K562 (cell line): ENCODE measurements at regions of chr16 and their contacts with region 1.

Region 1: DNA sequence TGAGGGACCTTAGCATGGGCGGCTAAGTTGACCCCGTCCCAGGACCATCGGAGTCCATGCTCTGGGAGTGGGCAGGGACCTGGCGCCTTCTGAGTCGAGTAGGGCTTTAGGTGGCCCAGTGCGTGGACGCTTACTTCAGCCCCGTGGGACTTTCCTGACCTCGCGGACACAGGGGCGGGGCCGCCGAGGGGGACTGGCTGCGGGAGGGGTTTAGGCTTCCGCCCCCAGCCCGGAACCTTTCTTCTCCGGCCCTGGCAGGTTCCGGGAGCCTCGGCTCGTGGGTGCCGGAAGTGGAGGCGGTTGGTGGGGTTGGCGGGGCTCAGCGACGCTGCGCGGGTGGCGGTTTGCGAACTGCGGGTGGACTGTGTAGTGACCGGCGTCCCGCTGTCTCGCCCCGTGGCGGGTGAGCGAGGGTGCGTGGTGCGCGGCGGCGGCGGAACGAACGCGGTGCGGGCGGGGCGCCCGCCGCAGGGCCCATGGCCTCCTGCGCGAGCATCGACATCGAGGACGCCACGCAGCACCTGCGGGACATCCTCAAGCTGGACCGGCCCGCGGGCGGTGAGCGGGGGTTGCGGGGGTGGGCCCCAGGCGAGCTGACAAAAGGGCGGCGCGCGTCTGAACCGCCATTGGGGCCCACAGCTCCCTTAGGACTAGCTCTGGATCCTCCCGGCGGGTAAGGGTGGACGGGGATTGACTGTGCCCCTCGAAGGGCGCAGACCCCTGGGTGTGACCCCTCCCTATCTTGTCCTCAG is at the start of gene EDC4:
- DNase-seq: peak; percentile 90 to 95 (median 94)
- ATAC-seq: peak; percentile 94
- H3K4me3 ChIP-seq: peak within 1 kb of the TSS; percentile 85
- H3K27ac ChIP-seq: peak within 1 kb of the TSS; percentile 83
- H3K4me1 ChIP-seq: peaks cover 21% of the 10 kb centered on the region in 2 experiments; a peak in 4 of 5 replicates
- H3K27me3 ChIP-seq: no peaks in the 10 kb centered on the region
- CTCF ChIP-seq: no peak
- EP300 ChIP-seq: peak; percentile 66
- POLR2A ChIP-seq: peak; percentile 84
- RAD21 ChIP-seq: no peak
- polyA plus RNA-seq, gene EDC4: 1.1 to 2.7 TPM

Region 2: DNA sequence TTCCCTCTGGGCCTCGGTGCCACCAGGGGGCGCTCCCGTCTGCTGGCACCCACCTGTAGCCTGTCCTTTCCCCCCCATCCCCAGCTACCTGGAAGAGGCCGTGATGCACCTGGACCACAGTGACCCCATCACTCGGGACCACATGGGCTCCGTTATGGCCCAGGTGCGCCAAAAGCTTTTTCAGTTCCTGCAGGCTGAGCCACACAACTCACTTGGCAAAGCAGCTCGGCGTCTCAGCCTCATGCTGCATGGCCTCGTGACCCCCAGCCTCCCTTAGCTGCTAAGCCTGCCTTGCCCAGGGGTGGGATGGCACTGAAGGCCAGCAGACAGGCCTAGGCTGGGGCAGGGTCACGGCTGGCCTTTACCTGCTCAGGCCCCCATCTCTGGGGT is 10.9 kb after region 1 on chr16:
- CTCF ChIA-PET with region 1: interaction called, 3 read pairs
- POLR2A ChIA-PET with region 1: interaction called, 15 read pairs
- in situ Hi-C with region 1: no loop called
- intact Hi-C with region 1: no loop called
- DNase-seq: peak; percentile 62 to 77 (median 74)
- ATAC-seq: peak; percentile 69
- H3K4me3 ChIP-seq: no peak overlapping the region
- H3K27ac ChIP-seq: no peak overlapping the region
- H3K4me1 ChIP-seq: peaks cover 6 to 40% of the 10 kb centered on the region in 2 experiments; a peak in 4 of 5 replicates
- H3K27me3 ChIP-seq: no peaks in the 10 kb centered on the region
- CTCF ChIP-seq: peak; percentile 81 to 83 (median 81)
- EP300 ChIP-seq: no peak
- POLR2A ChIP-seq: no peak
- RAD21 ChIP-seq: peak; percentile 76 to 79

Region 3: DNA sequence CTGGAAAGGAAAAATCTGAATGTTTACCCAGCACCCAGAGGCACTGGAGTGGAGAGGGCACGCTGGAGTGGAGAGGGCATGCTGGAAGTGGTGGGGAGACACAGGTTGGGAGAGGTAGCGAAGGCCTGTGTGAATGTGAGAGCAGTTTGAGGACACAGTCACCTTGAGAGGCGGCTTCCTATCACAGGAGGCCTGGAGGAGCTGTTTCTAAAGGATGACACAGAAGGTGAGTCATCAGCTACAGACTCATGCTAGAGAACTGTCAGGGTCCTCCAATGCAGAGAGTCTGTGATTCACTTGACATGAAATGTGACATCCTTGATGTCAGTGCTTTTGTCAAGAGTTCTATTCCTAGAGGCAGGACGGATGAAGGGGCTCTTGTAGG is 44.9 kb after region 1 on chr16:
- CTCF ChIA-PET with region 1: no interaction called
- POLR2A ChIA-PET with region 1: no interaction called
- in situ Hi-C with region 1: no loop called
- intact Hi-C with region 1: no loop called
- DNase-seq: peak; percentile 66 to 75 (median 71)
- ATAC-seq: peak; percentile 77
- H3K4me3 ChIP-seq: no peak overlapping the region
- H3K27ac ChIP-seq: peak overlapping the region; percentile 56; the same call in 2 of the 3 replicates
- H3K4me1 ChIP-seq: peaks cover 18 to 29% of the 10 kb centered on the region in 2 experiments
- H3K27me3 ChIP-seq: no peaks in the 10 kb centered on the region
- CTCF ChIP-seq: no peak
- EP300 ChIP-seq: no peak
- POLR2A ChIP-seq: no peak
- RAD21 ChIP-seq: no peak